ENCODE measurements at regions of chr3 and their contacts with region 1.

Region 1: GRCh38 chr3:46866720-46867549 is 3.7 kb upstream of the MYL3 start:
- DNase-seq: peak; percentile 77 to 81
- H3K4me3 ChIP-seq: no peak overlapping the region
- H3K27ac ChIP-seq: peak overlapping the region in 1 of 3 donors; percentile 37
- H3K4me1 ChIP-seq: peaks cover 10 to 29% of the 10 kb centered on the region in 2 donors
- H3K27me3 ChIP-seq: no peaks in the 10 kb centered on the region
- CTCF ChIP-seq: peak; percentile 72 to 92 (median 84)
- POLR2A ChIP-seq: no peak

Region 2: DNA sequence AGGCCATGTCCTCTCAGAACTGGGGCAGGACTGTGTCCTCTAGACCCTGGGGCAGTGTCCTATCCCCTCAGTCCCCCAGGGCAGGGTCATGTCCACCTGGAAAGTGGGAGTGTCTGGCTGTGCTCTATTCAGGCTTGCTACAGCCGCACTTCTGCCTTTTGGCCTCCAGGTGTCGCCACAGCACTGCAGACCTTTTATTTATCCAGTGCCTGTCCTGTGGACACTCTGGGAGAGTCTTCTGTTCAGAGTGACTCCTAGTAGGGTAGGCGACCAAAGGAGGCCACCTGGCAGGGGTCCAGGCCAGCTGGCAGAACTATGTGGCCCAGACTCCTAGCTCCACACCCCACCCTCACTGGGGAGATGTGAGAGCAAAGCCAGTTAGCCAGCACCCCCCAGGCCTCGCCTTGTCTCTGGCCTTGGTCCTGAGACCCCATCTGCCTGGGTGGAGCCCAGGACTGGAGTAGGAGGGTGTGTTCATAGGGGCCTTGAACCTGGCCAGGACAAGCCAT is 161.9 kb before region 1 on chr3:
- intact Hi-C with region 1: loop called (anchors 10 kb)
- DNase-seq: peak; percentile 78 to 82
- H3K4me3 ChIP-seq: no peak overlapping the region
- H3K27ac ChIP-seq: no peak overlapping the region
- H3K4me1 ChIP-seq: peaks cover 6 to 15% of the 10 kb centered on the region in 2 donors
- H3K27me3 ChIP-seq: no peaks in the 10 kb centered on the region
- CTCF ChIP-seq: peak; percentile 90 to 98 (median 94)
- POLR2A ChIP-seq: no peak

Region 3: DNA sequence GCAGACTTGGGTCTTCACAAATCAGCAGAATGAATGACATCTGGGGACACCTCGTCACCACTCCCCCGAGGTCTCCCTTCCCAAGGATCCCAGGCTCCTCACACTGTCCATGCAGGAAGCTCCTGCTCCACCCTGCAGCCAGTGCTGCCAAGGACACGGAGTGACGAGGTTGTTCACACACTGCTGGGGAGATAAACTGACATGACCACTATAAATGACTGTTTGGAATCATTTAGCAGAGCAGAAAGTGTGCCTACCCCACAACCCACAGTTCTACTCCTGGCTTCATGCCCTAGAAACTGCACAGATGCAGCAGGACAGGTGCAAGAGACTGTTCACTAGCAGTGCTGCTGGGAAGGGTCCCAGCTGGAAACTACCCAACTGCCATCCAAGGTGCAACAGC is 129.6 kb before region 1 on chr3:
- intact Hi-C with region 1: no loop called
- DNase-seq: no peak
- H3K4me3 ChIP-seq: no peak overlapping the region
- H3K27ac ChIP-seq: no peak overlapping the region
- H3K4me1 ChIP-seq: no peaks in the 10 kb centered on the region
- H3K27me3 ChIP-seq: no peaks in the 10 kb centered on the region
- CTCF ChIP-seq: no peak
- POLR2A ChIP-seq: no peak

Region 4: GRCh38 chr3:46759239-46760167 is 107.4 kb before region 1 on chr3:
- intact Hi-C with region 1: no loop called
- DNase-seq: no peak
- H3K4me3 ChIP-seq: no peak overlapping the region
- H3K27ac ChIP-seq: no peak overlapping the region
- H3K4me1 ChIP-seq: no peaks in the 10 kb centered on the region
- H3K27me3 ChIP-seq: no peaks in the 10 kb centered on the region
- CTCF ChIP-seq: no peak
- POLR2A ChIP-seq: no peak

Region 5: GRCh38 chr3:46895204-46895660 is 28.3 kb after region 1 on chr3:
- intact Hi-C with region 1: loop called (anchors 2 kb)
- DNase-seq: peak; percentile 75 to 77
- H3K4me3 ChIP-seq: no peak overlapping the region
- H3K27ac ChIP-seq: no peak overlapping the region
- H3K4me1 ChIP-seq: peaks cover 8 to 38% of the 10 kb centered on the region in 2 donors
- H3K27me3 ChIP-seq: no peaks in the 10 kb centered on the region
- CTCF ChIP-seq: peak; percentile 66 to 85 (median 78)
- POLR2A ChIP-seq: no peak

Region 6: DNA sequence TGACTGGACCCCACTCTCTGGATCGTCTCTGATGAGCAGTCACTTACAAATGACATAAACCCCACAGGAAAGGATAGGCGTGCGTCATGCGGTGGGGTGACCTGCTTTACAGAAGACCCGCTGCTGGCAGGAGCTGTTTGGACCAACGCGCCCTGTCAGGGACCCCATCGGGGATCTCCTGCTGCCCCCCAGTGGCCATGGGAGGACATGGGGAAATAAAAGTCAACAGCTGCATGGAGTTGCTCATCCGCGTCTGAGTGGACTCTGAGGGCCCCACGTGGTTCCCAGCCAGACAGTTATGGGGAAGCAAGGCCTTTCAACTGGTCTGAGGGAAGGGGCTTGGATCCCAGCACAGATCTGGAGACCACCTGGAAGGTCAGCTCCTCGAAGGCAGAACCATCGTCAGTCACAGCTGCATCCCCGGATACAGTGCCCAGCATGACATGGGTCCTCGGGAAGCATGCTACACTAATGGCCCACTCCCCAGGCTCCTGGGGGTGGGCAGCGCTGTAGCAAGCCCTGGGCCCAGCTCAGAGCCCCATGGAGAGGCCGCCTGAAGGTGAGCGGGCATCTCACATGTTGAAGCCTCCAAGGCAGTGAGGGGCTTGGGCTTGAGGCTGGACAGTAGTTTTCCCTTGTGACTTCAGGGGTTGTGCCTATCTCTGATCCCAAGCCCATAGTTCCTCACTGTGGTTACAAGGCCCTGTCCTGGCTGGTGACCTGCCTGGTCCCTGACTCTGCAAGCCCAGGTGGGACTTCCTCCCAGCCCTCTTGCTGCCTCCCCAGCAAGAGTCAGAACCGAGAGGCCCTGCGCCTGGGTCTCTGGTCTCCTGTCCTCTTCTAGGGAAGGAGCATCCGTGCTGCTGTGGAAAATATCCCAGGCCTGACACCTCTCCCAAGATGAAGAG is 42.9 kb after region 1 on chr3:
- intact Hi-C with region 1: loop called (anchors 5 kb)
- DNase-seq: peak; percentile 94 to 96
- H3K4me3 ChIP-seq: no peak overlapping the region
- H3K27ac ChIP-seq: no peak overlapping the region
- H3K4me1 ChIP-seq: peaks cover 12 to 32% of the 10 kb centered on the region in 2 donors
- H3K27me3 ChIP-seq: no peaks in the 10 kb centered on the region
- CTCF ChIP-seq: peak; percentile 82 to 97 (median 94)
- POLR2A ChIP-seq: no peak

Region 7: GRCh38 chr3:46953234-46954010 is 86.5 kb after region 1 on chr3:
- intact Hi-C with region 1: no loop called
- DNase-seq: no peak
- H3K4me3 ChIP-seq: no peak overlapping the region
- H3K27ac ChIP-seq: peak overlapping the region in 1 of 3 donors; percentile 14
- H3K4me1 ChIP-seq: peaks cover 27 to 70% of the 10 kb centered on the region in 2 donors
- H3K27me3 ChIP-seq: no peaks in the 10 kb centered on the region
- CTCF ChIP-seq: no peak
- POLR2A ChIP-seq: no peak

Region 8: GRCh38 chr3:46998121-46998851 is 131.4 kb after region 1 on chr3:
- intact Hi-C with region 1: loop called (anchors 5 kb)
- DNase-seq: peak; percentile 79 to 82
- H3K4me3 ChIP-seq: no peak overlapping the region
- H3K27ac ChIP-seq: no peak overlapping the region
- H3K4me1 ChIP-seq: no peaks in the 10 kb centered on the region
- H3K27me3 ChIP-seq: no peaks in the 10 kb centered on the region
- CTCF ChIP-seq: peak; percentile 35 to 87 (median 82)
- POLR2A ChIP-seq: no peak

Region 9: GRCh38 chr3:47496892-47497291 is 630.0 kb after region 1 on chr3:
- intact Hi-C with region 1: no loop called
- DNase-seq: no peak
- H3K4me3 ChIP-seq: no peak overlapping the region
- H3K27ac ChIP-seq: no peak overlapping the region
- H3K4me1 ChIP-seq: no peaks in the 10 kb centered on the region
- H3K27me3 ChIP-seq: no peaks in the 10 kb centered on the region
- CTCF ChIP-seq: no peak
- POLR2A ChIP-seq: no peak

Measured in thyroid gland (tissue), 4 donors.